CD8-positive, alpha-beta T cell (primary cell): ENCODE measurements at regions of chr1 and their contacts with region 1.

Region 1: DNA sequence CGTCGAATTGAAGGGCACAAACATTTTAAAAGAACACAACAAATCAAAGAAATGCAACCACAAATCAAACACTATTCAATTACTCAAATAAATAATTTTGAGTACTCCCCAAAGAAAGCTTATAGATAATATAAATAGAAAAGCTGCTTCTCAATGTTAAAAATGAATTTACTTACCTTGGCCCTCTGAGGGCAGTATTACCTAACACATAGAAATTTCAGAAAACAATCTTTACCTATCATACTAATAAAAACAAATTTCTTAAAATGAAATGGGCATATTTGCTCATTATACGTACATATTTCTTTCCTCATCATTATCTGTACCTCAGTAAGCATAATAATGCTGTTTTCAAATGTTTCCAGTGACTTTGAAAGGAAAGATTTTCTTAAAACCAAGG is 141.8 kb downstream of the AKT3 start:
- DNase-seq: peak in 2 of 9 experiments; percentile 18 to 36
- ATAC-seq: no peak
- H3K4me3 ChIP-seq: no peak overlapping the region
- H3K4me3 Mint-ChIP-seq: no peak overlapping the region
- H3K27ac ChIP-seq: no peak overlapping the region
- H3K27ac Mint-ChIP-seq: no peak overlapping the region
- H3K4me1 ChIP-seq: no peaks in the 10 kb centered on the region
- H3K4me1 Mint-ChIP-seq: peaks cover 23% of the 10 kb centered on the region
- H3K27me3 ChIP-seq: no peaks in the 10 kb centered on the region
- H3K27me3 Mint-ChIP-seq: no peaks in the 10 kb centered on the region
- CTCF ChIP-seq: peak; percentile 60

Region 2: DNA sequence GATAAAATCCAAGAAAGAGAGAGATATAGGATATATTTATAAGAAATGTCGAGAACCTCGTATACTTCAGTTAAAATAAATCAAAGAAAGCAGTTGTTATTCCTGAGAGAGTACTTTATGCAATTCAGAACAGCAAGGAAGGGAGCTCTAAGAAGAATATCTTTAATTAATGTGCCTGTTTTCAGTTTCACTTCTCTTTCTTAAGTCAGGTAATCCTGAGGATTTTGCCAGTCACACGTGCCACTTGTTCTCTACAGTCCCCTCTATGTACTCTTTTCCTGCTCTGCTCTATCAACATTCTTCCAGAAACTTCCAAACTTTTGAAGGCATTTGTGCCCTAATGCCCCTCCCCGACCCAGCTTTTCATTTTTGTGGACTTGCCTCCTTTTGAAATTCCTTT is 70.0 kb before region 1 on chr1:
- CTCF ChIA-PET with region 1: no interaction called
- POLR2A ChIA-PET with region 1: no interaction called
- intact Hi-C with region 1: no loop called
- DNase-seq: no peak
- ATAC-seq: no peak
- H3K4me3 ChIP-seq: no peak overlapping the region
- H3K4me3 Mint-ChIP-seq: no peak overlapping the region
- H3K27ac ChIP-seq: no peak overlapping the region
- H3K27ac Mint-ChIP-seq: peak overlapping the region; percentile 53
- H3K4me1 ChIP-seq: no peaks in the 10 kb centered on the region
- H3K4me1 Mint-ChIP-seq: peaks cover 4% of the 10 kb centered on the region
- H3K27me3 ChIP-seq: no peaks in the 10 kb centered on the region
- H3K27me3 Mint-ChIP-seq: no peaks in the 10 kb centered on the region
- CTCF ChIP-seq: no peak

Region 3: GRCh38 chr1:243693800-243694199 is 14.4 kb before region 1 on chr1:
- CTCF ChIA-PET with region 1: no interaction called
- POLR2A ChIA-PET with region 1: no interaction called
- intact Hi-C with region 1: no loop called
- DNase-seq: no peak
- ATAC-seq: no peak
- H3K4me3 ChIP-seq: no peak overlapping the region
- H3K4me3 Mint-ChIP-seq: no peak overlapping the region
- H3K27ac ChIP-seq: no peak overlapping the region
- H3K27ac Mint-ChIP-seq: no peak overlapping the region
- H3K4me1 ChIP-seq: no peaks in the 10 kb centered on the region
- H3K4me1 Mint-ChIP-seq: peaks cover 13% of the 10 kb centered on the region
- H3K27me3 ChIP-seq: no peaks in the 10 kb centered on the region
- H3K27me3 Mint-ChIP-seq: no peaks in the 10 kb centered on the region
- CTCF ChIP-seq: no peak

Region 4: DNA sequence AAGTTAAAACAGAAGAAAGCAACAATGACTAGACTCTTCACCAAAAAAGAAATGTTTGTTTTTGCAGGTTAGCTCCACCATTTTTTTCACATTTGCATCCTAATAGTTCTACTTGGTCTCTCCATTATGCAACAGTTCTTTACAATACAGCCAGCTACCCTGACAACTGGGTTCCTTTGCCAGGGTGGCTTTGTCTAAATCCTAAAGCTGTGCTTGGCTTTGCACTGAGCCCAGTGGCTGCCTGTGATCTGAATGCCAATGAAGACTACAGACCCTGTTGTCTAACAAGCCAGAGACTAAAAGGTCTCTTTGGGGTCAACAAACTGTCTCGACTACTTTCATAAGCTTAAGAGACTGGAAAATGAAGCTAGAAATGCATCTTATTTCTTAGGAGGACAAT is 29.8 kb after region 1 on chr1:
- CTCF ChIA-PET with region 1: no interaction called
- POLR2A ChIA-PET with region 1: no interaction called
- intact Hi-C with region 1: no loop called
- DNase-seq: no peak
- ATAC-seq: no peak
- H3K4me3 ChIP-seq: no peak overlapping the region
- H3K4me3 Mint-ChIP-seq: no peak overlapping the region
- H3K27ac ChIP-seq: no peak overlapping the region
- H3K27ac Mint-ChIP-seq: no peak overlapping the region
- H3K4me1 ChIP-seq: no peaks in the 10 kb centered on the region
- H3K4me1 Mint-ChIP-seq: peaks cover 28% of the 10 kb centered on the region
- H3K27me3 ChIP-seq: no peaks in the 10 kb centered on the region
- H3K27me3 Mint-ChIP-seq: no peaks in the 10 kb centered on the region
- CTCF ChIP-seq: no peak

Region 5: DNA sequence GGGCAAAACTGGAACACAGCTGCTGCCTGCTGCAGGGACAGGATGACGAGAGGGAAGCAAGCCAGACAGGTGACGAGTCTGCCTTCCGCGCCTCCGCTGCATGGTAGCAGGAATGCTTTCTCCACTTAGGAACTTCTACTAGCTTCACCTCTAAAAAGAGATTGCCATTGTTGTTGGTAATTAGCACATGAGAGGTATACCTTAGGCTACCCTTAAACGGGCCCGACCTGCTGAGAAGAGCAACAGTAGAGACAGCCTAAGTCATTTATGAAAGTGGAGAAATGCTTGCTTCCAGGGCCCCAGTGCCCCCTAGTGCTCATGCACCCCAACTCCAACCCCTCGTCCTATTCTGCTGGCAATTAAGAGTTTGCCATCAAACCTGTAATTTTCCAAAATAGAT is 238.7 kb after region 1 on chr1:
- CTCF ChIA-PET with region 1: interaction called, 4 read pairs
- POLR2A ChIA-PET with region 1: no interaction called
- intact Hi-C with region 1: loop called (anchors 1 to 2 kb)
- DNase-seq: peak in 8 of 9 experiments; percentile 5 to 63 (median 42)
- ATAC-seq: peak; percentile 67
- H3K4me3 ChIP-seq: no peak overlapping the region
- H3K4me3 Mint-ChIP-seq: no peak overlapping the region
- H3K27ac ChIP-seq: no peak overlapping the region
- H3K27ac Mint-ChIP-seq: no peak overlapping the region
- H3K4me1 ChIP-seq: no peaks in the 10 kb centered on the region
- H3K4me1 Mint-ChIP-seq: no peaks in the 10 kb centered on the region
- H3K27me3 ChIP-seq: no peaks in the 10 kb centered on the region
- H3K27me3 Mint-ChIP-seq: peaks cover under 1% of the 10 kb centered on the region
- CTCF ChIP-seq: peak; percentile 60